ENCODE measurements at regions of chrX and their contacts with region 1.

Region 1: GRCh38 chrX:103845165-103845653 is 13.2 kb upstream of the RAB9B start:
- DNase-seq: peak; percentile 58
- H3K4me3 Mint-ChIP-seq: no peak overlapping the region
- H3K27ac Mint-ChIP-seq: no peak overlapping the region
- H3K4me1 Mint-ChIP-seq: peaks cover 5% of the 10 kb centered on the region
- H3K27me3 Mint-ChIP-seq: no peaks in the 10 kb centered on the region

Region 2: DNA sequence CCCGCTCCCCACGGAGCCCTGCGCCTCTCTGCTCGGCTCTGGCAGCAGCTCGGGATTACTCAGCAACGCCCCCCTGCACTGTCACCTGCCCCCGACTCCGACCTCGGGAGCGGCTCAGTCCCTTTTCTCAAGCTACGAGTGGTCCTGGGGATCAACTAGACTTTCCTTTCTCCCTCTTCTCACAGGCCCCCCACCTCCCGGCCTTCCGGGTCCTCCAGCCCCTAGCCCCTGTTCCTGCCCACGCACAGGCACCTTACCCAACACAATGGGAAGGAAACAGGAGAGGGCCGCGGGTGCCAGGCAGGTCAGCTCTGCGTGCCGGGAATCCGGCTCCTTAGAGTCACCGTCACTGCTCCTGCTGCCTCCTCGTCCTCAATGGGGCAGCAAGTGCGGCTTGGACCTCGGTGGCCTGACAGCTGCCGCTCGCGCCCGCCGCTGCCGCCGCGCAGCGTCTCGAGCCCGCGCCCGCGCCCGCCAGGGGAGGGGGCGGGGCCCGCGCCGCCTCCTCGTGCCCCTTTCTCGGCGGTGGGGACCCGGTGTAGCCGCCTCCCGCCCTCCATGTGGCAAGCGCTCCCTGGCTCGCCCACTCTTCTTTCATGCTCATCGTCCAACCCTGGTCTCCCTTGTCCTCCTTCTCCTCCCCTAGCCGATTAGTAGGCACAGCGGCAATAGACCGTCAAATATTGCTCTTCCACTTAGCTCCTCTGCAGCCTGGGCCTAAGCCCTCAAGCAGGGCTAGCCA is 13.2 kb before region 1 on chrX and contains the start of gene RAB9B:
- CTCF ChIA-PET with region 1: interaction called, 10 read pairs
- POLR2A ChIA-PET with region 1: no interaction called
- intact Hi-C with region 1: no loop called
- DNase-seq: peak; percentile 75
- H3K4me3 Mint-ChIP-seq: peak within 1 kb of the TSS; percentile 70
- H3K27ac Mint-ChIP-seq: no peak within 1 kb of the TSS
- H3K4me1 Mint-ChIP-seq: peaks cover 3% of the 10 kb centered on the region
- H3K27me3 Mint-ChIP-seq: peaks cover 4% of the 10 kb centered on the region
- total RNA-seq, gene RAB9B: 0.44 to 0.57 TPM

Region 3: GRCh38 chrX:103889231-103889630 is 44.0 kb after region 1 on chrX:
- CTCF ChIA-PET with region 1: no interaction called
- POLR2A ChIA-PET with region 1: no interaction called
- intact Hi-C with region 1: no loop called
- DNase-seq: no peak
- H3K4me3 Mint-ChIP-seq: no peak overlapping the region
- H3K27ac Mint-ChIP-seq: no peak overlapping the region
- H3K4me1 Mint-ChIP-seq: no peaks in the 10 kb centered on the region
- H3K27me3 Mint-ChIP-seq: no peaks in the 10 kb centered on the region

Region 4: DNA sequence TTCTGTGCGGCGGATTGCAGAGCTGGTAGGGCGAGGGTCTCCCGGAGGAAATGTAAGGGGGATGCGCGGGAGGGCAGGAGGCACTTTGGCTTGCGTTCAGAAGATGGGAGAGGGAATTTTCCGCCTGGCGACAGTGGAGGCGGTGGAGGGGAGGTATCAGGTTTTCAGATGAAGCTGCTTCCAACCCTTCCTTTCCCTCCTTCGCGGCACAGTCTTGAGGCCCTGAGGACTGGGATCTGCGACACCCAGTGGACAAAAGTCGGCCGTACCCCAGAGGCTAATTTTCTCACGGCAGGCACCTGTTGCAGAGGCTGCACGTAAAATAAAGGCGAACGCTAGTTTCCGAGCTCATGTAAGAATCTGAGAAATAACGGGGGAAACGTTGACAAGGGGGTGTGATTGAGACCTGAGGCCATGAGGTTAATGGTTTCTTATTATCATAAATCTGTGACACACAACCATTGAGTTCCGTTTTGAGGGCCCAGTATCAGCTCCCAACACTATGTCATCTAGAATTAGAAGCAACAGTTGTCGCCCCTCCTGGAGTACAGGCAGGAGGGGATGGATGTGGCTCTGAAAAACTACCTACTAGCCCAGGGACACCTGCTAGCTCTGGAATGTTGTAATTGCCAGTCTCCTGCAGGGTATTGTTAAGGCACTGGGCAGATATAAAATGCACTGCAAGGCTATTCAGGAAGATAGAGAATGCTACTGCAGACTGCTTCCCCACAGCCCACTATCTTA is 268.2 kb after region 1 on chrX:
- CTCF ChIA-PET with region 1: interaction called, 18 read pairs
- POLR2A ChIA-PET with region 1: no interaction called
- intact Hi-C with region 1: loop called (anchors 5 kb)
- DNase-seq: peak; percentile 70
- H3K4me3 Mint-ChIP-seq: peak overlapping the region; percentile 79
- H3K27ac Mint-ChIP-seq: peak overlapping the region; percentile 49
- H3K4me1 Mint-ChIP-seq: peaks cover 44% of the 10 kb centered on the region
- H3K27me3 Mint-ChIP-seq: no peaks in the 10 kb centered on the region

Region 5: GRCh38 chrX:104270920-104271512 is 425.8 kb after region 1 on chrX:
- CTCF ChIA-PET with region 1: no interaction called
- POLR2A ChIA-PET with region 1: no interaction called
- intact Hi-C with region 1: loop called (anchors 10 kb)
- DNase-seq: peak; percentile 42
- H3K4me3 Mint-ChIP-seq: no peak overlapping the region
- H3K27ac Mint-ChIP-seq: no peak overlapping the region
- H3K4me1 Mint-ChIP-seq: peaks cover 2% of the 10 kb centered on the region
- H3K27me3 Mint-ChIP-seq: peaks cover 20% of the 10 kb centered on the region